HepG2 (cell line): ENCODE measurements at regions of chr3 and their contacts with region 1.

Region 1: DNA sequence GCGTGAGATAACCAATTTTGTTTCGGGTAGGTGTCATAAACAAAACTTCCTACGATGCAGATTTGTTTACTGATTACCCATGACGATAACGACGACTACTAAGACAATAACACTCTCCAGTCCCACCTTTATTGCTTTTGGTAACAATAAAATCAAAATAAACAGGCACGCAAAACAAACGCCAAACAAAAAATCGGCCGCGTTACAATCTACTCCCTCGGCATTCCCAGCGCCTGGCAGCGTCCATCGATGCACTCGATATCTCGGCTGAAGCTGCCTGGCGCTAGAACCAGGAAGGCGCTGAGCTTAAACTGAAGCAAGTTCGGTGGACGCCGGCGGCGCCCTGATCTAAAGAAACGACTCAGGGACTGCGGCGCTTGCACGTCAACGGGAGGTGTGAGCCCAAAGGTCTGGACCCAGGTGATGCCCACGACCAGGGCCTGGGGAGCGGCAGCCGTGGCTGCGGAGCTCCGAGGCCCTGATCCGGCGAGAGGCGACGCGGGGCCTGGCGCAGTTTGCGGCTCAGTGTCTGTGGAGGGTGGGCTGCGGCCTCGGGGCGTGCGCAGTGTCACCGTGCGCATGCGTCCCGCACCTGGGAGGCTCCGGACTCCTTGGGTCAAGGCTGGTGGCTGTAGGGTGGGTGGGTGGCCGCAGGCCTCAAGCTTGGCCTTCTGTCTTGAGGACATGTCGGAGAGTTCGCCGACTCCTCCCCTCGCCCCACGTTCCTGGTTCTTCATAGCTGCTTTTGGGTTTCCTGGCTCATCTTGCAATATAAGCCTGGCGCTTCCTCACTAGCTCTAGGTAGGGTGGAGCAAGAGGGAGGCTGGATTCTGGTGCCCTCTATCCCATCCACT is at the start of gene RSRC1:
- DNase-seq: peak; percentile 81
- ATAC-seq: peak; percentile 93
- H3K4me3 ChIP-seq: peak within 1 kb of the TSS; percentile 90 to 97 (median 90)
- H3K27ac ChIP-seq: peak within 1 kb of the TSS; percentile 95
- H3K4me1 ChIP-seq: peaks cover 52% of the 10 kb centered on the region
- H3K27me3 ChIP-seq: peaks cover 9 to 37% of the 10 kb centered on the region in 2 experiments; a peak in 4 of 5 replicates
- CTCF ChIP-seq: 0 out of 2 replicates have a peak, but pooled peaks have one; percentile 18
- EP300 ChIP-seq: no peak
- POLR2A ChIP-seq: peak; percentile 88 to 91
- RAD21 ChIP-seq: peak; percentile 21; the same call in 1 of the 2 replicates
- total RNA-seq, gene RSRC1: 63.0 and 71.9 TPM in 2 replicates

Region 2: GRCh38 chr3:157865352-157866000 is 244.6 kb before region 1 on chr3:
- CTCF ChIA-PET with region 1: no interaction called
- POLR2A ChIA-PET with region 1: no interaction called
- in situ Hi-C with region 1: no loop called
- intact Hi-C with region 1: loop called (anchors 1 kb)
- DNase-seq: peak; percentile 2
- ATAC-seq: peak; percentile 97
- H3K4me3 ChIP-seq: no peak overlapping the region
- H3K27ac ChIP-seq: no peak overlapping the region
- H3K4me1 ChIP-seq: no peaks in the 10 kb centered on the region
- H3K27me3 ChIP-seq: no peaks in the 10 kb centered on the region; a peak in 1 of 5 replicates
- CTCF ChIP-seq: peak; percentile 85
- EP300 ChIP-seq: no peak
- POLR2A ChIP-seq: no peak
- RAD21 ChIP-seq: peak; percentile 63

Region 3: GRCh38 chr3:158058495-158059130 is 51.4 kb before region 1 on chr3:
- CTCF ChIA-PET with region 1: no interaction called
- POLR2A ChIA-PET with region 1: no interaction called
- in situ Hi-C with region 1: no loop called
- intact Hi-C with region 1: no loop called
- DNase-seq: no peak
- ATAC-seq: no peak
- H3K4me3 ChIP-seq: no peak overlapping the region
- H3K27ac ChIP-seq: no peak overlapping the region
- H3K4me1 ChIP-seq: no peaks in the 10 kb centered on the region
- H3K27me3 ChIP-seq: no peaks in the 10 kb centered on the region
- CTCF ChIP-seq: no peak
- EP300 ChIP-seq: no peak
- POLR2A ChIP-seq: no peak
- RAD21 ChIP-seq: no peak

Region 4: GRCh38 chr3:158097593-158098308 is 12.3 kb before region 1 on chr3:
- CTCF ChIA-PET with region 1: no interaction called
- POLR2A ChIA-PET with region 1: interaction called, 11 read pairs
- in situ Hi-C with region 1: no loop called
- intact Hi-C with region 1: no loop called
- DNase-seq: peak; percentile 76
- ATAC-seq: peak; percentile 96
- H3K4me3 ChIP-seq: peak overlapping the region; percentile 70 to 85 (median 73)
- H3K27ac ChIP-seq: no peak overlapping the region
- H3K4me1 ChIP-seq: peaks cover 9% of the 10 kb centered on the region
- H3K27me3 ChIP-seq: peaks cover 2 to 31% of the 10 kb centered on the region in 2 experiments; a peak in 2 of 5 replicates
- CTCF ChIP-seq: 0 out of 2 replicates have a peak, but pooled peaks have one; percentile 21
- EP300 ChIP-seq: no peak
- POLR2A ChIP-seq: peak; percentile 75 to 86
- RAD21 ChIP-seq: no peak

Region 5: GRCh38 chr3:158160966-158161365 is 50.9 kb after region 1 on chr3:
- CTCF ChIA-PET with region 1: no interaction called
- POLR2A ChIA-PET with region 1: no interaction called
- in situ Hi-C with region 1: no loop called
- intact Hi-C with region 1: no loop called
- DNase-seq: no peak
- ATAC-seq: no peak
- H3K4me3 ChIP-seq: no peak overlapping the region
- H3K27ac ChIP-seq: no peak overlapping the region
- H3K4me1 ChIP-seq: no peaks in the 10 kb centered on the region
- H3K27me3 ChIP-seq: no peaks in the 10 kb centered on the region
- CTCF ChIP-seq: no peak
- EP300 ChIP-seq: no peak
- POLR2A ChIP-seq: no peak
- RAD21 ChIP-seq: no peak

Region 6: GRCh38 chr3:158221426-158221825 is 111.4 kb after region 1 on chr3:
- CTCF ChIA-PET with region 1: no interaction called
- POLR2A ChIA-PET with region 1: no interaction called
- in situ Hi-C with region 1: no loop called
- intact Hi-C with region 1: no loop called
- DNase-seq: no peak
- ATAC-seq: no peak
- H3K4me3 ChIP-seq: no peak overlapping the region
- H3K27ac ChIP-seq: no peak overlapping the region
- H3K4me1 ChIP-seq: no peaks in the 10 kb centered on the region
- H3K27me3 ChIP-seq: no peaks in the 10 kb centered on the region; a peak in 1 of 5 replicates
- CTCF ChIP-seq: no peak
- EP300 ChIP-seq: no peak
- POLR2A ChIP-seq: no peak
- RAD21 ChIP-seq: no peak

Region 7: GRCh38 chr3:158249183-158249582 is 139.2 kb after region 1 on chr3:
- CTCF ChIA-PET with region 1: no interaction called
- POLR2A ChIA-PET with region 1: no interaction called
- in situ Hi-C with region 1: no loop called
- intact Hi-C with region 1: no loop called
- DNase-seq: no peak
- ATAC-seq: no peak
- H3K4me3 ChIP-seq: no peak overlapping the region
- H3K27ac ChIP-seq: no peak overlapping the region
- H3K4me1 ChIP-seq: no peaks in the 10 kb centered on the region
- H3K27me3 ChIP-seq: no peaks in the 10 kb centered on the region
- CTCF ChIP-seq: no peak
- EP300 ChIP-seq: no peak
- POLR2A ChIP-seq: no peak
- RAD21 ChIP-seq: no peak